CD4-positive, alpha-beta memory T cell (primary cell): ENCODE measurements at regions of chr22 and their contacts with region 1.

Region 1: DNA sequence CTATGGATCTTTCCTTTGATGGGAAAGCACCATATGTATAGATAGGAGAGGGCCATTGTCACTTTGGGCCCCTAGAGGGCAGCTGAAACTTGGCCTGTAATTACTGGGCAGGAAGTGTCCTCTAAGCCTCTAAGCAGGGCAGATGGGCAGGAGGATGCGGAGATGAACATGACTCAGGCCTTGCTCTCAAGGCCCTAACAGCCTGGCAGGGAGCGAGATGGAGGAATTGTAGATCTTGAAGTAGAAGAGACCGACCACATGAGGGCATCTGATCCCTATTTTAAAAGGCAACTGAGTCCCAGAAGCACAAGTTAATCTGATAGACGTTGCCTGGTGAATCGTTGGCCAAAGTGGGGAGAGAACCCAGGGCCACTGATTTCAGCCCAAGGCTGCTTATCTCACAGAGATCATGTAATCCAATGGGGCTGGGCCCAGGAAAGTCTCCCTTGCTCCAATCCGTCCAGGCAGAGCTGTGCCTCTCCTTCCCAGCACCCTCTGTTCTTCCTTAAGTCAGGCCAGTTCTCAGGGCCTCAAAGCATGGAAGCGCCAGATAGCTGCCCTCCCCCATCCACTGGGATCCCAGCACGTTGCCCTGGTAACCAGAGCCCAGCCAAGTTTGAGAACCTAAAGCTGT is 2.5 kb upstream of the SEPTIN3 start:
- DNase-seq: peak in 4 of 5 donors; percentile 39 to 58 (median 48)
- H3K4me3 ChIP-seq: no peak overlapping the region
- H3K4me3 Mint-ChIP-seq: no peak overlapping the region
- H3K27ac ChIP-seq: no peak overlapping the region
- H3K27ac Mint-ChIP-seq: peak overlapping the region in 1 of 7 donors; percentile 0
- H3K4me1 ChIP-seq: no peaks in the 10 kb centered on the region
- H3K4me1 Mint-ChIP-seq: peaks cover 0 to 4% (median 1%) of the 10 kb centered on the region in 4 donors
- H3K27me3 ChIP-seq: no peaks in the 10 kb centered on the region
- H3K27me3 Mint-ChIP-seq: peaks cover 3 to 8% of the 10 kb centered on the region in 2 donors

Region 2: DNA sequence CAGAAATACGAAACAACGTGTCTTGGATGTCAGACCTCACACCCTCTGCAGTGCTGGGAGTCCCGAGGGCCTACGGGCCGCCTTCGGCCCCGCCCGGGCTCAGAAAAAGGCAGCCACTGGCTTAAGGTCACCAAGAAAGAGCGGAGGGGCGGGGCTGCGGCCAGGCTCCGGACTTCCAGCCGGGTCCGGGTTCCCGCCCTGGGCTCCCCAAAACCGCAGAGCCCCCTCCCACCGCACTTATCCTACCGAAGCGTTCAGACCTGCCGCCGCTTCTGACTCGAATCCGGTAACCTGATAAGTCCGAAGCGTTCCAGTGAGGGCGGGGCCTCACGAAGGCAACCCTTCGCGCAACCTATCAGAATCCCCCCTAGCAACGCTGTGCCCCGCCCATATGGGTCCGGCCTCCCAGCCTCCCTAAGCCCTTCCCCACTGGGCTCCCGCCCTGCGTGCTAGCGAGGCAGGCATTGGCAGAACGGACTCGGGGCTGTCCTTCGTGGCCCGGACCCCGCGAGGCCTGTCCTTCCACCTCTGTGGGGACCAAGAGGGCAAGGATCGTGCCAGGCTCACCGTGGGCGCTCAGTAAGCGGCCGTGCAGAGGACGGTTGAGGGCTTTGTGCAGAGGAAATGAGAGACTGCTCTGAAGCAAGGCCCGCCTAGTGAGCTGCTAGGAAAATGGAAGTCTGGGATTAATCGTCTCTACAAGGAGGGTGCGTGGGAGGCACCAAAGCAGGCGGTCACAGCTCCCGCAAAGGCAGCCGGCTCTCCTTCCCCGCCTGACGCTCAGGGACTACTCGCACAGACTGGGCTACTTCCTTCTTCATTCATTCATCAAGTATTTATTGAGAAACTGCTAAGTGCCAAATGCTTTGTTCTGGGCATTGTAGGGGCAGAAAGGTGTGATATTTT is 104.0 kb after region 1 on chr22 and contains the start of gene NAGA:
- CTCF ChIA-PET with region 1: interaction called, 3 read pairs
- POLR2A ChIA-PET with region 1: no interaction called
- intact Hi-C with region 1: loop called (anchors 5 kb)
- DNase-seq: peak; percentile 89 to 95 (median 90)
- H3K4me3 ChIP-seq: peak within 1 kb of the TSS; percentile 37 to 51
- H3K4me3 Mint-ChIP-seq: peak within 1 kb of the TSS; percentile 92 to 95 (median 92)
- H3K27ac ChIP-seq: peak within 1 kb of the TSS; percentile 74
- H3K27ac Mint-ChIP-seq: peak within 1 kb of the TSS; percentile 93 to 97 (median 94)
- H3K4me1 ChIP-seq: peaks cover 40% of the 10 kb centered on the region
- H3K4me1 Mint-ChIP-seq: peaks cover 20 to 59% (median 39%) of the 10 kb centered on the region in 4 donors
- H3K27me3 ChIP-seq: no peaks in the 10 kb centered on the region
- H3K27me3 Mint-ChIP-seq: no peaks in the 10 kb centered on the region
- total RNA-seq, gene NAGA: 13.9 to 14.5 TPM

Region 3: DNA sequence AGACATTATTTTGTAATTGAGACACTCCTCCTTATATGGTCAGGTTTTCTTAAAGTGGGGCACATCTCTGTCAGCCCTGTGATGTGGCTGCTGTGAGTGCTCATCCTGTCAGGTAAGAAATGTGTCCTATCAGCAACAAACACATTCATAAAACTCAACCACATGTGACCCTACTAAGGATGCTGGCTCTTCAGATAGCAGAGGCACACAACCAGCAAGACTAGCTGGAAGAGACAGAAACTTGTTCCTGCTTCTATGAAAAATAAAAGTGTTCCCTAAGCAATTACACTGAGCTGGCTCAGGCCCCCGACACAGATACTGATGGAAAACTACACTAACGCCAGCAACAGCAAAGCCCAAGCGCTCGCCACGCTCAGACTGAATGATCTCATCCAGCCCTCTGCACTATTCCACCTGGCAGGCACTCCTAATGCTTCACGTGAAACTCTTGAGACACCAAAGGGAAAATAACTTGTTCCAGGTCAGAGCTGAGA is 213.7 kb after region 1 on chr22:
- CTCF ChIA-PET with region 1: no interaction called
- POLR2A ChIA-PET with region 1: no interaction called
- intact Hi-C with region 1: loop called (anchors 10 kb)
- DNase-seq: peak; percentile 76 to 86 (median 84)
- H3K4me3 ChIP-seq: no peak overlapping the region
- H3K4me3 Mint-ChIP-seq: peak overlapping the region in 7 of 8 donors; percentile 55 to 89 (median 72)
- H3K27ac ChIP-seq: peak overlapping the region; percentile 58
- H3K27ac Mint-ChIP-seq: peak overlapping the region; percentile 92 to 97 (median 96)
- H3K4me1 ChIP-seq: peaks cover 90% of the 10 kb centered on the region
- H3K4me1 Mint-ChIP-seq: peaks cover 71 to 96% (median 83%) of the 10 kb centered on the region in 4 donors
- H3K27me3 ChIP-seq: no peaks in the 10 kb centered on the region
- H3K27me3 Mint-ChIP-seq: no peaks in the 10 kb centered on the region

Region 4: DNA sequence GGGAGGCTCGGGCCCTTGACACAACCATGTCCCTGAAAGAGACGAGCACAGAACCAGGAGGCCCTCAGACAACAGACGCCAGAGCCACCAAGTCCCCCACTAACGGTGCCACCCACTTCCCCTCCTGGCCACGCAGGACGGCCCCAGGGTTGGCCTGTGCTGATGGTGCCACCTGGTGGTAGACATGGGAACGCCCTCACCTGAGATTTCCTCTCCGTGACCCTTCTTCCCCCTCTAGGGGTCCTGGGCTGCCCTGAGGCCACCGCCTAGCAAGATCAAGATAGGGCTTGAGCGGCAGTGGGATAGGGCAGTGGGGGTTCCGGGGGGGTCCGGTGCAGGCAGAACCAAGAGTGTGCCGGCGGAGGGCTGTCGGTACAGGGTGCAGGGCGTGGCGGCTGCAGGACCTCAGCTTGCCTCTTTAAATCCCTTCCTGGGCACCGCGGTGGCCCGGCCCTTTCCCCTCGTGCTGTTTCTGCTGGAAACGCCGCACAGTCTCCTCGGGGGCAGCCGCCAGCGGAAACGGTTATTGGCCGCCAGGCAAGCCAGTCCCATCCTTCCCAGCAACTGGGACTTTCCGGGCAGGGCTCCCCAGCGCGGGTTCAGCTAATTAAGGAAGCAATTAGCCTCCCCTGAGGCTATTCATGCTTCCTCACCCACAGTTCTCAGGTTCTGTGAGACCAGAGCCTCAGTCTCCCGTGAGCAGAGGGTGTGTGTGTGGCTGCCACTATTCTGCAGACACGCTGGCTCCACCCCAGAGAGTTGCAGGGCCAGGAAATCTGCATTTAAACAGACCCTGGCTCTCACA is 471.0 kb after region 1 on chr22:
- CTCF ChIA-PET with region 1: interaction called, 29 read pairs
- POLR2A ChIA-PET with region 1: interaction called, 3 read pairs
- intact Hi-C with region 1: loop called (anchors 1 kb)
- DNase-seq: peak; percentile 80 to 86 (median 81)
- H3K4me3 ChIP-seq: peak overlapping the region; percentile 48 to 79
- H3K4me3 Mint-ChIP-seq: peak overlapping the region; percentile 77 to 91 (median 84)
- H3K27ac ChIP-seq: peak overlapping the region; percentile 3
- H3K27ac Mint-ChIP-seq: peak overlapping the region in 5 of 7 donors; percentile 48 to 83 (median 76)
- H3K4me1 ChIP-seq: peaks cover 10% of the 10 kb centered on the region
- H3K4me1 Mint-ChIP-seq: peaks cover 4 to 17% (median 7%) of the 10 kb centered on the region in 4 donors
- H3K27me3 ChIP-seq: no peaks in the 10 kb centered on the region
- H3K27me3 Mint-ChIP-seq: peaks cover 0 to 2% of the 10 kb centered on the region in 2 donors

Region 5: GRCh38 chr22:42553475-42554361 is 587.0 kb after region 1 on chr22 and contains the start of gene SERHL2:
- CTCF ChIA-PET with region 1: no interaction called
- POLR2A ChIA-PET with region 1: no interaction called
- intact Hi-C with region 1: loop called (anchors 2 kb)
- DNase-seq: peak; percentile 74 to 88 (median 79)
- H3K4me3 ChIP-seq: peak within 1 kb of the TSS; percentile 61 to 66
- H3K4me3 Mint-ChIP-seq: peak within 1 kb of the TSS; percentile 78 to 90 (median 82)
- H3K27ac ChIP-seq: no peak within 1 kb of the TSS
- H3K27ac Mint-ChIP-seq: peak within 1 kb of the TSS in 5 of 7 donors; percentile 41 to 85 (median 80)
- H3K4me1 ChIP-seq: peaks cover 16% of the 10 kb centered on the region
- H3K4me1 Mint-ChIP-seq: peaks cover 9 to 29% (median 11%) of the 10 kb centered on the region in 4 donors
- H3K27me3 ChIP-seq: no peaks in the 10 kb centered on the region
- H3K27me3 Mint-ChIP-seq: no peaks in the 10 kb centered on the region
- total RNA-seq, gene SERHL2: 0.36 to 0.81 TPM